HAP-1 (cell line): ENCODE measurements at regions of chr4 and their contacts with region 1.

Region 1: DNA sequence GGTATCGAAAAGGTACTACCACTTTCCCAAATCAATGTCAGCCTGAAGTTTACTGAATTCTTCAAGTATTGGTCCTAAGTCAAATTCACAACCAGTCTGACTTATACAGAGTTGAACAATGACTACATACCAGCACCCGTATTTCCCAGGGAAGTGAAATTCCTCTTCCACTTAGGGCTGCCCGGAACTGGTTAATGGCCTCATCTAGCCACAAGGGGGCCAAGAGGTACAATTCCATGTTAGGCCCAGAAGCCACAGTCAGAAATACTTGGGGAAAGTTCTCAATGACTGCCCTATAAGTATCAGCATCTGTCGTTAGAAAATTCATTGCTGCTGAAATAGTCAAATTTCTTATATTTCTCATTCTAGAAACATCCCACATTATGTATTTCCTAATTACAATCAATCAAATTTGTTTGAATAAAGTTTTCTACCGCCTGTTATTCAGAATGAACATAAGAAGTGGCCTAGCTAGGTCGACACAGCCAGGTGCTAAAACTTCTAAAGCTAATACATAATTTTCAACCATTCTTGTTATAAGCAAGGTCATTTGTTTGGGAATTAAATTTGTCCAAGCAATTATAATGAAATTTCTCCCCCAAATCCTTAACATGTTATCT is 5.7 kb upstream of the PCDH7 start:
- DNase-seq: peak; percentile 55 to 75
- H3K4me3 ChIP-seq: no peak overlapping the region
- H3K4me1 ChIP-seq: peaks cover 14% of the 10 kb centered on the region; the same call in 1 of the 2 replicates
- H3K27me3 ChIP-seq: peaks cover 10% of the 10 kb centered on the region

Region 2: GRCh38 chr4:31307029-31307428 is 592.5 kb after region 1 on chr4:
- in situ Hi-C with region 1: loop called (anchors 25 kb)
- DNase-seq: no peak
- H3K4me3 ChIP-seq: no peak overlapping the region
- H3K4me1 ChIP-seq: no peaks in the 10 kb centered on the region
- H3K27me3 ChIP-seq: no peaks in the 10 kb centered on the region